ENCODE measurements at regions of chr13 and their contacts with region 1.

Region 1: DNA sequence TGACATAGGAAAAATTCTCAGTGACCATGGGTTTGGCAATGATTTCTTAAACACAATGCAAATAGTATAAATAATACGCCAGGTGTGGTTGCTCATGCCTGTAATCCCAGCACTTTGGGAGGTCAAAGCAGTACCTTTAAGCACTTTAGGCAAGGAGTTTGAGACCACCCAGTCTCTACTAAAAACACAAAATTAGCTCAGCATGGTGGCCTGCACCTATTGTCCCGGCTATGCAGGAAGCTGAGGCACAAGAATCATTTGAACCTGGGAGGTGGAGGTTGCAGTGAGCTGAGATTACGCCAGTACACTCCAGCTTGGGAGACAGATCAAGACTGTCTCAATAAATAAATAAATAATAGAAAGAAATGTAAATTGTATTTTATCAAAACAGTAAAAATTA is 356.5 kb upstream of the SLITRK6 start:
- DNase-seq: no peak
- H3K4me3 Mint-ChIP-seq: no peak overlapping the region
- H3K27ac Mint-ChIP-seq: no peak overlapping the region
- H3K4me1 Mint-ChIP-seq: no peaks in the 10 kb centered on the region
- H3K27me3 Mint-ChIP-seq: no peaks in the 10 kb centered on the region

Region 2: GRCh38 chr13:86082116-86082515 is 73.6 kb before region 1 on chr13:
- CTCF ChIA-PET with region 1: no interaction called
- POLR2A ChIA-PET with region 1: no interaction called
- intact Hi-C with region 1: loop called (anchors 2 kb)
- DNase-seq: no peak
- H3K4me3 Mint-ChIP-seq: no peak overlapping the region
- H3K27ac Mint-ChIP-seq: no peak overlapping the region
- H3K4me1 Mint-ChIP-seq: no peaks in the 10 kb centered on the region
- H3K27me3 Mint-ChIP-seq: no peaks in the 10 kb centered on the region

Region 3: GRCh38 chr13:86201477-86201876 is 45.7 kb after region 1 on chr13:
- CTCF ChIA-PET with region 1: no interaction called
- POLR2A ChIA-PET with region 1: no interaction called
- intact Hi-C with region 1: no loop called
- DNase-seq: no peak
- H3K4me3 Mint-ChIP-seq: no peak overlapping the region
- H3K27ac Mint-ChIP-seq: no peak overlapping the region
- H3K4me1 Mint-ChIP-seq: no peaks in the 10 kb centered on the region
- H3K27me3 Mint-ChIP-seq: no peaks in the 10 kb centered on the region

Region 4: DNA sequence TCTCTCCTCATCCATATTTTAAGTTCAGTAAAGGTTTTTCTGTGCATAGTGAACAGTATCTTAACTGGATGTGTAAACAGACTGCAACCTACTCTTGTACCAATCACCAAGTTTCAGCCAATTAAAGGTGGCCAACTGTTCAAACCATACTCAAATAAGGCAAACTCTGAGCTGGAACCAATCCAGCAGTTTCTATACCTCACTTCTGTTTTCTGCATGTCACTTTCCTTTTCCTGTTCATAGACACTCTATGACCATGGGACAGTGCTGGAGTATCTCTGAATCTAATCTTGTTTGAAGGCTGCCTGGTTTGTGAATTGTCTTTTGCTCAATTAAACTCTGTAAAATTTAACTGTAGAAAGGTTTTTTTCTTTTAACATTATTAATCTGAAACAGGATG is 113.8 kb after region 1 on chr13:
- CTCF ChIA-PET with region 1: no interaction called
- POLR2A ChIA-PET with region 1: no interaction called
- intact Hi-C with region 1: no loop called
- DNase-seq: no peak
- H3K4me3 Mint-ChIP-seq: no peak overlapping the region
- H3K27ac Mint-ChIP-seq: no peak overlapping the region
- H3K4me1 Mint-ChIP-seq: no peaks in the 10 kb centered on the region
- H3K27me3 Mint-ChIP-seq: no peaks in the 10 kb centered on the region

Measured in activated CD4-positive, alpha-beta memory T cell treated with anti-CD3 and anti-CD28 coated beads for 36 hours (primary cell).